Activated CD4-positive, alpha-beta T cell treated with anti-CD3 and anti-CD28 coated beads, Interleukin-2, amount 10 ng/mL, durations not matched to agents 24 days and 14 days (primary cell): ENCODE measurements at regions of chr18 and their contacts with region 1.

Region 1: GRCh38 chr18:13216092-13216582 is 2.4 kb upstream of the LDLRAD4 start:
- DNase-seq: peak; percentile 85
- H3K4me3 Mint-ChIP-seq: peak overlapping the region; percentile 79
- H3K27ac Mint-ChIP-seq: peak overlapping the region; percentile 84
- H3K4me1 Mint-ChIP-seq: peaks cover 30% of the 10 kb centered on the region
- H3K27me3 Mint-ChIP-seq: peaks cover 38% of the 10 kb centered on the region

Region 2: DNA sequence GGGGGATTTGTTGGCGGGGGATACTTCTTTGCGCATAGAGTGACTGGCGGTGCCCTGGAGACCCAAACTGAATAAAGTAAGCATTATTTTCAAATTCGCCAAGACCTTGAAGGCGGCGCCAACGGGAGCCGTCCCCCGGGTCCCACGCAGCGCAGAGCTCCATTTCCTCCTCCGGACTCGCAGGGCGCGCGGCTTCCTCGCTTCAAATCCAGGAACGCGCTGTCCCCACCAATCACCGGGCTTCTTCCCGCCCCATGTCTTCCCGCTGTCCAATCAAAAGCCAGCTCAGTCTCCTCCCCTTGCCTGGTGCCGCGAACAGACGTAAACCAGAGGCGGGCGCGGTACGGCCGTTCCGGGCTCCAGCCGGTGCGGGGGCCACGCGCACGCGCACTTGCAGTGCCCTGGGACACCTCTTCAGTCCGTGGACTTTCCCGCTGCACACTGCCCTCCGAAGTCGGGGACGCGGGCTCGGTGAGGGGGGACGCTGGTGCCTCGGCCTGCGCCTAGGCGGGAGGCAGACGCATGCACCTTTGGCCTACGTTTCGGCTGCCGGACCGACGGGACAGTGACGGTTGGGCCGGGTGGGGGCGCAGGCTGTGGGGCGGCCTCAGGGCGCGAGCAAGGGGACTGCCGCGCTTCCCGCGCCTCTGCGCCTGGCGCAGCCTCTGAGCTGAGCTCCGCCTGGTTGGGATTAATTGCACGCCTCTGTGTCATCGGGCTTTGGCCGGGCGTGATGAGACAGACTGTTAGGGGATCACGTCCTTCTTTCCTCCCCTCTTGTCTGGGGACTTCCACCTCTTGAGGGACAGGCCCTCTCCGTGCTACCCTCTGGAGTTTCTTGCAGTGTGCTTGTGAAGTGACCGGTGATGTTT is 224.9 kb before region 1 on chr18 and contains the start of gene CEP192:
- intact Hi-C with region 1: loop called (anchors 5 kb)
- DNase-seq: peak; percentile 99
- H3K4me3 Mint-ChIP-seq: peak within 1 kb of the TSS; percentile 94
- H3K27ac Mint-ChIP-seq: peak within 1 kb of the TSS; percentile 92
- H3K4me1 Mint-ChIP-seq: peaks cover 16% of the 10 kb centered on the region
- H3K27me3 Mint-ChIP-seq: no peaks in the 10 kb centered on the region
- total RNA-seq, gene CEP192: 31.4 and 34.7 TPM in 2 replicates

Region 3: DNA sequence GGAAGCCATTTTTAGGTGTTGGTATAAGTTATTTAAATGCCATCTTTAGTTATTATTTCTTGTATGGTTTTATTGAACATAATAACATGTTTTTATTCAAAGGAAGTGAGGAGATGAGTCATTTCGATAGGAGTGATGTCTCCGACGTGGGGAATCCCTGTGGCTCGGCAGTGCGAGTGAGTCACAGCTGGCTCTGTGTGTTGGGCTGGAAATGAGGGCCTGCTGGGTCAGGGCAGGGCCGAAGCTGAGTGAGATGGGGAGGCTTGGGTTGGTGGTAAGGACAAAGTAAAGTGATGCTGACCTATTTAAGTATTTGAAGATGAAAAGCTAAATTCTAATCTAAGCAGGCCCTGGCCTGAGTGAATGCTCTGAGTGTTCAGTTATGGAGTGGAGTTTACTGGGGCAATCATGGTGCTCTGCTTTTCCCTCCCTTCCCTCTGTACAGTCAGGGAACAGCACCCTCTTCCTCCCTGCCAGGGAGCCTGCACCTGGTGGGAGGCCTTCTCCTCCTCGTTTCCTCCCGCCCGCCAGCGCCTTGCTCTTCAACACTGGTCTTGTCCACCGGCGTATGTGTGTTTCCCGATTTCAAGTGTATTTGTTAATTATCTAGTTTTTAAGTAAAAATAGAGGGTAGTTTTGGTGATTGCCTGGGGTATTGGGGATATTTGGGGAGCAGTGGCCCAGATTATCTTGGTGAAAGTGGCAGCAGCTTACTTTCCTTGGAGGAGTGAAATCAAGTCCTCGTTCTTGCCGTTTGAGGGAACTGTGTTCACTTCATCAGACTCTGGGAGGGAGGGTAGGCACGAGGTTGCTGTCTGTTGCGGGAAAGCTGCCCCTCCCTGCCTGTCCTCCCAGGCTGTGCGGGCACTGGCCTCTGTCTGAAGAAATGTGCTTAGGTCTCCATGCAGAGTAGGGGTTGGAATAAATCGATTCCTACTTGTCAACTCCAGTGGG is 159.4 kb after region 1 on chr18:
- intact Hi-C with region 1: loop called (anchors 1 kb)
- DNase-seq: peak; percentile 94
- H3K4me3 Mint-ChIP-seq: peak overlapping the region; percentile 74
- H3K27ac Mint-ChIP-seq: peak overlapping the region; percentile 93
- H3K4me1 Mint-ChIP-seq: peaks cover 69% of the 10 kb centered on the region
- H3K27me3 Mint-ChIP-seq: no peaks in the 10 kb centered on the region

Region 4: GRCh38 chr18:13500227-13500865 is 284.2 kb after region 1 on chr18:
- intact Hi-C with region 1: loop called (anchors 5 kb)
- DNase-seq: peak; percentile 66
- H3K4me3 Mint-ChIP-seq: no peak overlapping the region
- H3K27ac Mint-ChIP-seq: no peak overlapping the region
- H3K4me1 Mint-ChIP-seq: peaks cover 25% of the 10 kb centered on the region
- H3K27me3 Mint-ChIP-seq: no peaks in the 10 kb centered on the region

Region 5: GRCh38 chr18:13611601-13612195 is 395.6 kb after region 1 on chr18:
- intact Hi-C with region 1: loop called (anchors 2 kb)
- DNase-seq: no peak
- H3K4me3 Mint-ChIP-seq: peak overlapping the region; percentile 94
- H3K27ac Mint-ChIP-seq: peak overlapping the region; percentile 97
- H3K4me1 Mint-ChIP-seq: peaks cover 72% of the 10 kb centered on the region
- H3K27me3 Mint-ChIP-seq: no peaks in the 10 kb centered on the region

Region 6: DNA sequence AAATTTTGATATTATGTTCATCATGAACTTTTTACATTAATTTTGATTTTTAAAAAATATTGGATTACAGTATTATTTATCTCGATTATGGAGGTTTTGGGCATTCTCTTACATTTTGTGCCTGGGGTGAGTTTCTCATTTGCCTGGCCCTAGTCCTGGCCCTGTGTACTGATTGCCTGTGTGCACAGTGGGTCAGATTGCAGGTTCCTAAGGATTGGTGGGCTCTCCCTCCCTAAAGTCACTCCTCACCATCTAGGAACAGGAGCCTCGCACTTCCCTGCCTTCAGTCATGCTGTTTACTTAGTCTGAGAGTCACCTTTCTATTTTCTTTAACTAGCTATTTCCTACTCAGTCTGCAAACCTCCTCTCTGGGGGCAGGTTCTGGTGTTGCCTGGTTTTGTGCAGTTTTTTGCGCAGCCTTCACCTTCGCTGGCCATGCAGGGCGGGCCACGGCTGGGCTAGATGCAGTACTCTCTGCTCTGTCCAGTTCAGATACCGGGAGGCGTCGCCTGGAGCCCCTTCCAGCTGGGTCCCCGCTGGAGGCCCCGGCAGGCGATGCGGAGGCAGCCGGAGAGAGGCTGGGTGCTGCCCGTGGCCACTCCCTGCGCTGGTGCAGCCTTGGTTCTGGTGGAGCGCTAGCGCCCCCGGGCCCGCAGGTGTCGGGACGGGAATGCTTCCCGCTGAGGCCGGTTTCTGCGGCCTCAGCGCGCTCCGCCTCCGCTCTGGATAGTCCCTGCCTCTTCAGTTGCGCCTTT is 584.5 kb after region 1 on chr18:
- intact Hi-C with region 1: loop called (anchors 2 kb)
- DNase-seq: peak; percentile 81
- H3K4me3 Mint-ChIP-seq: peak overlapping the region; percentile 49
- H3K27ac Mint-ChIP-seq: no peak overlapping the region
- H3K4me1 Mint-ChIP-seq: peaks cover 7% of the 10 kb centered on the region
- H3K27me3 Mint-ChIP-seq: peaks cover 45% of the 10 kb centered on the region